Mammary epithelial cell (primary cell): ENCODE measurements at regions of chr6 and their contacts with region 1.

Region 1: DNA sequence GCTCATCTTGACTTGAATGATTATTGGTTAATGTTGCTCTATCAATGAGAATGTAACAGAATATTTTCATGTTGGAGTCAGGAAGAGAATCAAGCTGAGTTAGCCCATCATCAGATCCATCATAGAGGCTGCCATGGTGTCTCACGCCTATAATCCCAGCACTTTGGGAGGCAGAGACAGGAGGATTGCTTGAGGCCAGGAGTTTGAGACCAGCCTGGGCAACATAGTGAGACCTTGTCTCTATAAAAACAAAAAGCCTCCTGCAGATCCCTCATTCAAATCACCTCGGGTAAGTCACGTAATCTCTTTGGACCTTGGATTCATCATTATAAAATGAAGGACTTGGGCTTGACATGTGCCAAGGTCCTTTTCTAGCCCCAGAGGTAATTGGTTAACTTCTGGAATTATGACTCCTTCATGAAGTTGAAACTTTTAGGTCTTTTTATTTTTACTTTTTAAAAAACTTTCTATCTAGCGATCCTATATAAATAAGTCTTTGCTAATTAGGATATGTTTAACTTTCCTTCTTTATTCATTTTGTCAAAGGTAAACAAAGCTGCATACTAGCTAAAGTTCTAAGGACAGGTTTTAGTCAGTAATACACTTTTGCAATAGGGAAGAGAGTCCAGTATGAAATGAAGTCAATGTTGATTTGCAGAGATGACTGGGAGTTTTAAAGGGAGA is 110.9 kb downstream of the ZFAND3 start:
- DNase-seq: no peak
- H3K4me3 ChIP-seq: no peak overlapping the region
- H3K27ac ChIP-seq: no peak overlapping the region
- H3K4me1 ChIP-seq: no peaks in the 10 kb centered on the region
- H3K27me3 ChIP-seq: no peaks in the 10 kb centered on the region
- CTCF ChIP-seq: no peak

Region 2: GRCh38 chr6:37566111-37566949 is 364.1 kb before region 1 on chr6:
- CTCF ChIA-PET with region 1: no interaction called
- dilution Hi-C with region 1: no loop called
- in situ Hi-C with region 1: no loop called
- intact Hi-C with region 1: no loop called
- DNase-seq: peak; percentile 13
- H3K4me3 ChIP-seq: peak overlapping the region in 2 of 3 experiments; percentile 28 to 29
- H3K27ac ChIP-seq: no peak overlapping the region
- H3K4me1 ChIP-seq: no peaks in the 10 kb centered on the region
- H3K27me3 ChIP-seq: peaks cover 3% of the 10 kb centered on the region
- CTCF ChIP-seq: peak; percentile 71 to 90

Region 3: DNA sequence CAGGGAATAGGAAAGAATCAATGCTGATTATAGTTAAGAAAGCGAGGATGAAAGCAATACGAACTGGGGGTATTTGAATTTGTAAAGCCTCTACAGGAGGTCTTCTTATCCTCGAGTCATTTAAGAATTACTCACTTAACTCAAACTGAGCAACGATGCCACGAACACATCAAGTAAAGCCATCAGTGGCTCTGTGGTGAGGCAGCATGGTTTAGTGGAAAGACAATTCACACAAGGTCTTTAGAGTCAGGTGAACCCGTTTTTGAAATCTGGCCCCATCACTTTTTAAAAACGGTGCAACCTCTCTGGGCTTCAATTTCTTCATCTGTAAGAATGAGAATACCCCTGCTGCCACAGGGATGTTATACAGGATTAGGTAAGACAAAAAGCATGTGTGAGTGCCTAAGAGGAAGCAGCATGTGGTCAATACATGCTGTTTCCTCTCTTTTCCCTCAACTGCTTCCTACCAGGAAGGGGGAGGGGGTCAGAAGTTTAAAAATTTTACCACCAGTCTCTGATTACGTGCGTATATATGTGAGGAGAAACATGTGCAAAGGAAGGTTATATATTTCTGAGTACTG is 547.3 kb after region 1 on chr6:
- CTCF ChIA-PET with region 1: interaction called, 11 read pairs
- dilution Hi-C with region 1: no loop called
- in situ Hi-C with region 1: no loop called
- intact Hi-C with region 1: no loop called
- DNase-seq: no peak
- H3K4me3 ChIP-seq: no peak overlapping the region
- H3K27ac ChIP-seq: no peak overlapping the region
- H3K4me1 ChIP-seq: no peaks in the 10 kb centered on the region
- H3K27me3 ChIP-seq: no peaks in the 10 kb centered on the region
- CTCF ChIP-seq: no peak